ENCODE measurements at regions of chr12 and their contacts with region 1.

Region 1: GRCh38 chr12:4604684-4605193 is 42.7 kb downstream of the DYRK4 start:
- DNase-seq: peak; percentile 87
- ATAC-seq: peak; percentile 97
- H3K4me3 ChIP-seq: peak overlapping the region; percentile 70 to 90 (median 85)
- H3K4me3 Mint-ChIP-seq: peak overlapping the region; percentile 99
- H3K27ac ChIP-seq: peak overlapping the region in 1 of 2 donors; percentile 50
- H3K27ac Mint-ChIP-seq: peak overlapping the region; percentile 96
- H3K4me1 ChIP-seq: peaks cover 4 to 6% of the 10 kb centered on the region in 2 donors
- H3K4me1 Mint-ChIP-seq: peaks cover 25% of the 10 kb centered on the region
- H3K27me3 ChIP-seq: no peaks in the 10 kb centered on the region
- H3K27me3 Mint-ChIP-seq: no peaks in the 10 kb centered on the region
- CTCF ChIP-seq: peak; percentile 100

Region 2: DNA sequence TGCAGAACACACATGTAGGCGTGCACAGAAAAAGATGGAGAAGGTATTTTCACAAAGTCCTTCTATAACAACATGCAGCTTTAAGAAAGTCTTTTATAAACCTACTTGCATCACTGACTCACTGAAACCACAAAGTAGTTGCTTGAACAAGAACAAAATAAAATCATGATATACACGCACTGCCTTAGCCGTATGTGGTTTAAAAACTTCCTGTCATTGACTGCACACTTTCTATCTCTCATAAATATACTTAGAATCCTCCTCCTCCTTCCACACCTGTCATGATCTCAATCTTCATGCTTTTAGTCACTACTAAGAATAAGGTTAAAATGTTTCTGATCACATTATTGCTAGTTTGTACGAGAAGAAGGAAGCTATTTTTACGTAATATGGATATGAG is 97.9 kb before region 1 on chr12:
- CTCF ChIA-PET with region 1: no interaction called
- POLR2A ChIA-PET with region 1: no interaction called
- intact Hi-C with region 1: no loop called
- DNase-seq: no peak
- ATAC-seq: no peak
- H3K4me3 ChIP-seq: no peak overlapping the region
- H3K4me3 Mint-ChIP-seq: peak overlapping the region; percentile 2
- H3K27ac ChIP-seq: peak overlapping the region in 1 of 2 donors; percentile 15
- H3K27ac Mint-ChIP-seq: no peak overlapping the region
- H3K4me1 ChIP-seq: peaks cover 0 to 11% of the 10 kb centered on the region in 2 donors
- H3K4me1 Mint-ChIP-seq: peaks cover 11% of the 10 kb centered on the region
- H3K27me3 ChIP-seq: no peaks in the 10 kb centered on the region
- H3K27me3 Mint-ChIP-seq: no peaks in the 10 kb centered on the region
- CTCF ChIP-seq: no peak

Region 3: GRCh38 chr12:4538207-4539160 is 66.3 kb before region 1 on chr12 and contains the start of gene RAD51AP1:
- CTCF ChIA-PET with region 1: interaction called, 6 read pairs
- POLR2A ChIA-PET with region 1: interaction called, 9 read pairs
- intact Hi-C with region 1: loop called (anchors 1 kb)
- DNase-seq: peak; percentile 98
- ATAC-seq: peak; percentile 98
- H3K4me3 ChIP-seq: peak within 1 kb of the TSS; percentile 92 to 100 (median 99)
- H3K4me3 Mint-ChIP-seq: peak within 1 kb of the TSS; percentile 95
- H3K27ac ChIP-seq: peak within 1 kb of the TSS; percentile 94 to 99
- H3K27ac Mint-ChIP-seq: peak within 1 kb of the TSS; percentile 97
- H3K4me1 ChIP-seq: peaks cover 8 to 20% of the 10 kb centered on the region in 2 donors
- H3K4me1 Mint-ChIP-seq: peaks cover 35% of the 10 kb centered on the region
- H3K27me3 ChIP-seq: no peaks in the 10 kb centered on the region
- H3K27me3 Mint-ChIP-seq: no peaks in the 10 kb centered on the region
- CTCF ChIP-seq: no peak
- total RNA-seq, gene RAD51AP1: 3.4 and 4.6 TPM in 2 replicates

Region 4: DNA sequence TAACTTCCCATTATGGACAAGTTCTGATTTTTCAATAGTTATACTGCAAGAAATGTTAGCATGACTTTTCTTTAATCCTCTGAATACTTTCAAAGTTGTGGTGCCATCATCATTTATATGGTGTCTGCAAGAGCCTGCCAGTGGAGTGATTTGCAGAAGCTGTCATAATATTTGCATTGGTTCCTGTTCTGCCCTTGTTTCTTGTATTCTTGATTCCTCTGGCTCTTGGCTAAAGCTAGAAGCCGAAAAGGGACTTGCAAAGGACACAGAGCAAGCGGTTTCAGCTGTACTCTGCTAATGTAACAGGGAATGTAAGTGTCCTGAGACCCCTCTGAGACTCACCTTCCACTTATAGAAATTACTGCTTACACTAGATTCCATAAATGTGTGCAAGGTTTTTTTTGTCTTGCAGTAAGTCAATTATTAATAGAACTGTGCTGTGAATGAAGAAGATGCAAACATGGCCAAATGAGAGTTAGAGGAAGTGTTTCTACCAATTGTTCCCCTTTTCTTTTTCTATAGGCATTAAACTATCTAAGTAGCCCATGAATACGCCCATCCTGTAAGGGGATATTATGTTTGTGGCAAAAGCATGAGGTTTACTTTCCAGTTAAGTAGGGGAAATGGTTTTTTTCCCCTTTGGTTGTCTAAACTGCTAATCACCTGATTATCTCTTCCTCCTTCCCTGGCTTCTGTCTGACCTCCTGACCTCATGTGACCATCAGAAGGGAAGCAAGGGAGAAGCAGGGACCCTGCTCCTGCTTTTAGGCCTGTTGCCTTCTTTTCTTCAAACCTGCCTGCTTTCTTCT is 37.5 kb before region 1 on chr12:
- CTCF ChIA-PET with region 1: interaction called, 9 read pairs
- POLR2A ChIA-PET with region 1: interaction called, 3 read pairs
- intact Hi-C with region 1: loop called (anchors 1 kb)
- DNase-seq: peak; percentile 74
- ATAC-seq: peak; percentile 73
- H3K4me3 ChIP-seq: peak overlapping the region; percentile 10 to 40 (median 30)
- H3K4me3 Mint-ChIP-seq: peak overlapping the region; percentile 82
- H3K27ac ChIP-seq: peak overlapping the region; percentile 91 to 95
- H3K27ac Mint-ChIP-seq: peak overlapping the region; percentile 97
- H3K4me1 ChIP-seq: peaks cover 60 to 70% of the 10 kb centered on the region in 2 donors
- H3K4me1 Mint-ChIP-seq: peaks cover 68% of the 10 kb centered on the region
- H3K27me3 ChIP-seq: no peaks in the 10 kb centered on the region
- H3K27me3 Mint-ChIP-seq: no peaks in the 10 kb centered on the region
- CTCF ChIP-seq: no peak

Region 5: DNA sequence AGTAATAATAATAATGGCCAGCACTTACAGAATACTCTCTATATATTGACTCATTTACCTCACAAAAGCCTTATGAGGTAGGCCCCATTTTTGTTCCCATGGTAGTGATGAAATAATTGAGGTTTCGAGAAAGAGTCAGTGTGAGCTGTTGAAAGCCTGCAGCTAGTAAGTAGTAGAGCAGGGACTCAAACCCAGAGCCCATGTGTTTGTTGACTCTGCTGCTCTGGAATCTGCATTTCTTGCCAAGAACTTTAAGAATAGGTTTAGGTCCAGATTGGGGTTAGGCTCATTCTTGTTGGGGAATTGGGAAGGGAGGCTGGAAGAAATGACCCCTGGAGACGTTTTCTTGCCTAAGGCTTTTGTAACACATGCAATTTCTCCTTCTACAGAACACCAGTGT is 14.8 kb before region 1 on chr12:
- CTCF ChIA-PET with region 1: interaction called, 11 read pairs
- POLR2A ChIA-PET with region 1: no interaction called
- intact Hi-C with region 1: no loop called
- DNase-seq: no peak
- ATAC-seq: no peak
- H3K4me3 ChIP-seq: no peak overlapping the region
- H3K4me3 Mint-ChIP-seq: no peak overlapping the region
- H3K27ac ChIP-seq: no peak overlapping the region
- H3K27ac Mint-ChIP-seq: no peak overlapping the region
- H3K4me1 ChIP-seq: no peaks in the 10 kb centered on the region
- H3K4me1 Mint-ChIP-seq: no peaks in the 10 kb centered on the region
- H3K27me3 ChIP-seq: no peaks in the 10 kb centered on the region
- H3K27me3 Mint-ChIP-seq: no peaks in the 10 kb centered on the region
- CTCF ChIP-seq: no peak

Region 6: GRCh38 chr12:4621511-4621910 is 16.8 kb after region 1 on chr12:
- CTCF ChIA-PET with region 1: interaction called, 15 read pairs
- POLR2A ChIA-PET with region 1: no interaction called
- intact Hi-C with region 1: no loop called
- DNase-seq: no peak
- ATAC-seq: no peak
- H3K4me3 ChIP-seq: no peak overlapping the region
- H3K4me3 Mint-ChIP-seq: no peak overlapping the region
- H3K27ac ChIP-seq: no peak overlapping the region
- H3K27ac Mint-ChIP-seq: no peak overlapping the region
- H3K4me1 ChIP-seq: no peaks in the 10 kb centered on the region
- H3K4me1 Mint-ChIP-seq: peaks cover 3% of the 10 kb centered on the region
- H3K27me3 ChIP-seq: no peaks in the 10 kb centered on the region
- H3K27me3 Mint-ChIP-seq: no peaks in the 10 kb centered on the region
- CTCF ChIP-seq: no peak

Region 7: GRCh38 chr12:4648501-4649357 is 44.0 kb after region 1 on chr12 and contains the starts of genes AKAP3 and NDUFA9:
- CTCF ChIA-PET with region 1: interaction called, 12 read pairs
- POLR2A ChIA-PET with region 1: no interaction called
- intact Hi-C with region 1: loop called (anchors 1 kb)
- DNase-seq: peak; percentile 89
- ATAC-seq: peak; percentile 97
- H3K4me3 ChIP-seq: peak within 1 kb of the TSS; percentile 83 to 97 (median 90)
- H3K4me3 Mint-ChIP-seq: peak within 1 kb of the TSS; percentile 91
- H3K27ac ChIP-seq: peak within 1 kb of the TSS; percentile 62 to 83
- H3K27ac Mint-ChIP-seq: peak within 1 kb of the TSS; percentile 86
- H3K4me1 ChIP-seq: peaks cover 20 to 22% of the 10 kb centered on the region in 2 donors
- H3K4me1 Mint-ChIP-seq: peaks cover 52% of the 10 kb centered on the region
- H3K27me3 ChIP-seq: no peaks in the 10 kb centered on the region
- H3K27me3 Mint-ChIP-seq: no peaks in the 10 kb centered on the region
- CTCF ChIP-seq: no peak
- total RNA-seq, gene AKAP3: 3.8 and 4.6 TPM in 2 replicates
- total RNA-seq, gene NDUFA9: 73.3 and 74.2 TPM in 2 replicates

Measured in B cell (primary cell).